ENCODE measurements at regions of chr12 and their contacts with region 1.

Region 1: DNA sequence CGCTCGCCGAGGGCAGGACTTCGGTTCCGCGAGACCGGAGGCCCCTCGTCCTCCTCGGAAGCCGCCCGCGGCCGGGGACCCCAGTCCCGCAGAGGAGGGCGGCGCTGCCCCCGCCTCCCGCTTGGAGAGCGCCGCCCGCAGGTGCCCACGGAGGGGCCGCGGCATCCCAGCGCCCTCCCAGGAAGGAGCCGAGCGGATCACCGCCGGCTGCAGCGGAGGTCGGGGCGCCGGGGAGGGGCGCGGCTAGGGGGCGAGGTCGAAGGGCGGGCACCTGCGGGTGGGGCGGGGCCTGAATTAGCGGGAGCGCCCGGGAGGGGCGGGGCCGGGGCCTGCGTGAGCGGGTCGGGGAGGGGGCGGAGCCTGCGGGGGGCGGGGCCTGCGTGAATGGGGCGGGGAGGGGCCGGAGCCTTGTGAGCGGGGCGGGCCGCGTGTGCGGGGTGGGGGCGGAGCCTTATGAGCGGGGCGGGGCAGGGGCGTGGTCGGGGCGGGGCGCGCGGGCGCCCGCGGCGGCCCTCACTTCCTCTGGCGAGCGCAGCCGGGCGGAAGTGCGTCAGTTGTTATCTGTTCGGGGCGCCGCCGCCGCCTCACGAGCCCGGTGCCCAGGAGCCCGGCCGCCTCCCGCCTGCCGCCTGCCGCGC is at the start of gene FBRSL1:
- DNase-seq: peak; percentile 94
- H3K4me3 ChIP-seq: peak within 1 kb of the TSS; percentile 44 to 96 (median 74)
- H3K27ac ChIP-seq: peak within 1 kb of the TSS; percentile 60 to 76 (median 75)
- H3K4me1 ChIP-seq: peaks cover 0 to 49% (median 46%) of the 10 kb centered on the region in 4 donors
- H3K27me3 ChIP-seq: no peaks in the 10 kb centered on the region
- CTCF ChIP-seq: no peak
- EP300 ChIP-seq: no peak
- POLR2A ChIP-seq: no peak
- total RNA-seq, gene FBRSL1: 3.9 to 14.7 (median 7.7) TPM

Region 2: DNA sequence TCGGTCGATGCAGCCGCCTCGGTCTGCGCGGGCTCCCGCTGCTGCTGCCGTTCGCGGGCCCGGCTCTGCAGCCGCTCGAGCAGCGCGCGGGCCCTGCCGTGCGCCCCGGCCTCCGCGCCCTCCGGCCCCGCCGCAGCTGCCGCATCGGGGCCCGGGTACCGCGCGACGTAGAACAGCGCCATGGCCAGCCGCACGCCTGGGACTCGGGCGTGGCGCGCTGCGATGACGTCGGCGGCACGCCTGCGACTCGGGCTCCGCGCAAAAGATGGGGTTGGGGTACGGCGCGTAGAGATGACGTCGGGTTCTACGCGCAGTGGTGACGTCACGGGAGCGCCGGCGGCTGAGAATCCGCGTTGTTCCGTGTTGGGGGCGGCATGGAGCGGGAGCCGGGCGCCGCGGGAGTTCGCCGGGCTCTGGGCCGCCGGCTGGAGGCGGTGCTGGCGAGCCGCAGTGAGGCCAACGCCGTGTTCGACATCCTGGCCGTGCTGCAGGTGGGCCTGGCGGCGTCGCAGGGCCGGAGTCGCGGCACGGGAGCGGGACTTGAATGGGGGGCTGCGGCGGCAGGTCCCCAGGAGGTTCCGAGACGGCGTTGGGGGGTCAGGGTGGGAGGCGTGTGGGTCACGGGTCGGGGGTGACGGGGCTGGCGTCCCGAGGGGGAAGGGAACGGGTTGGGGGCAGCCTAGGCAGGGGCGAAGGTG is 345.5 kb before region 1 on chr12 and contains the starts of genes DDX51 and NOC4L:
- intact Hi-C with region 1: loop called (anchors 10 kb)
- DNase-seq: peak; percentile 97
- H3K4me3 ChIP-seq: peak within 1 kb of the TSS; percentile 96 to 98 (median 96)
- H3K27ac ChIP-seq: peak within 1 kb of the TSS; percentile 86 to 93 (median 90)
- H3K4me1 ChIP-seq: peaks cover 0 to 30% (median 25%) of the 10 kb centered on the region in 4 donors
- H3K27me3 ChIP-seq: no peaks in the 10 kb centered on the region
- CTCF ChIP-seq: no peak
- EP300 ChIP-seq: peak in 2 of 4 donors; percentile 19 to 78
- POLR2A ChIP-seq: peak; percentile 12 to 36
- total RNA-seq, gene DDX51: 6.8 to 13.7 (median 8.5) TPM
- total RNA-seq, gene NOC4L: 5.4 to 9.4 (median 7.5) TPM

Measured in sigmoid colon (tissue), 7 donors.